Activated T-helper 2 cell treated with anti-CD3 and anti-CD28 coated beads, Interferon-gamma antibody, Interleukin-2, Interleukin-4, amounts not matched to agents 10 μg/mL and 5 μg/mL and 100 μg/mL, durations not matched to agents 14 hours and 24 hours and 36 hours (primary cell): ENCODE measurements at regions of chr3 and their contacts with region 1.

Region 1: GRCh38 chr3:4350789-4351163 is 47.6 kb downstream of the SETMAR start:
- DNase-seq: peak; percentile 27
- H3K4me3 Mint-ChIP-seq: peak overlapping the region; percentile 43
- H3K27ac Mint-ChIP-seq: peak overlapping the region; percentile 74
- H3K4me1 Mint-ChIP-seq: peaks cover 23% of the 10 kb centered on the region
- H3K27me3 Mint-ChIP-seq: peaks cover 9% of the 10 kb centered on the region

Region 2: DNA sequence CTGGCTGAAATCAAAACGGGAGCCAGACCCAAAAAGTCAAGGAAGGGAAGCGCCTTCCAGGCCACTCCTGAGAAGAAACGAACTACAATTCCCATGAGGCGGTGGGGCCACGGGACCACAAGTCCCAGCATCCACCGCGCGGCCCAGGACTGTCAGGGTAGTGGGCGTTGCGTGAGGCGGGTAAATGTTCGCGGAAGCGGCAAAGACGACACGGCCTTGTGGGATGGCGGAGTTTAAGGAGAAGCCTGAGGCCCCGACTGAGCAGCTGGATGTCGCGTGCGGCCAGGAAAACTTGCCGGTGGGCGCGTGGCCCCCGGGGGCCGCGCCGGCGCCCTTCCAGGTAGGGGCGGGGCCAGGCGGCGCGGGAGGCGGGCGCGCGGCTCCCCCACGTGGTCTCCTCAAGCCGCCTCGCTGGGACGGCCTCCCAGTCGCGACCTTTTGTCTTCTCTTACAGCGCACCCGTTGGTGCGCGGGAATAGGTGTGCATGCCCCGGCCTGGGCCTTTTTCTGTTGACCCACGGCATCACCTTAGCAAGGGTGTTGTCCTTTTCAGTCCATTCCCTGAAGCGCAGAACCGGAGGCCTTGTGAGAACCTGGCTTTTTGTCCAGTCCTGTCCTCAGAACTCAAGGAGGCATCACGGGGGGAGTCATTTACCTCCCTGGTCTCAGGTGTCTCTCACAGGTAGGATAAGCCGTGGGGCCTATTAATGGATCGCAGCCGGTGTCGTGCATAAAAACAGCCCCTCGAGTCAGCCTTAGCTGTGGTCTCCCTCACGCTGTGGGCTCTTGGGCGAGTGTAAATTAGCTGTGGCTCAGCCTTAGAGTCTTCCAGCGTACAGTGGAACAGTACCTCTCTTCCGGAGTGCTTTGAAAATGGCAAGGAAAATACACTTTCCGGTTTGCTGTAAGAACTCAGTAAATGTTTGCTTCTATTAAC is 47.3 kb before region 1 on chr3 and contains the start of gene SETMAR:
- intact Hi-C with region 1: loop called (anchors 1 kb)
- DNase-seq: peak; percentile 75
- H3K4me3 Mint-ChIP-seq: peak within 1 kb of the TSS; percentile 90
- H3K27ac Mint-ChIP-seq: peak within 1 kb of the TSS; percentile 95
- H3K4me1 Mint-ChIP-seq: peaks cover 22% of the 10 kb centered on the region
- H3K27me3 Mint-ChIP-seq: peaks cover 4% of the 10 kb centered on the region
- total RNA-seq, gene SETMAR: 16.0 and 17.6 TPM in 2 replicates

Region 3: DNA sequence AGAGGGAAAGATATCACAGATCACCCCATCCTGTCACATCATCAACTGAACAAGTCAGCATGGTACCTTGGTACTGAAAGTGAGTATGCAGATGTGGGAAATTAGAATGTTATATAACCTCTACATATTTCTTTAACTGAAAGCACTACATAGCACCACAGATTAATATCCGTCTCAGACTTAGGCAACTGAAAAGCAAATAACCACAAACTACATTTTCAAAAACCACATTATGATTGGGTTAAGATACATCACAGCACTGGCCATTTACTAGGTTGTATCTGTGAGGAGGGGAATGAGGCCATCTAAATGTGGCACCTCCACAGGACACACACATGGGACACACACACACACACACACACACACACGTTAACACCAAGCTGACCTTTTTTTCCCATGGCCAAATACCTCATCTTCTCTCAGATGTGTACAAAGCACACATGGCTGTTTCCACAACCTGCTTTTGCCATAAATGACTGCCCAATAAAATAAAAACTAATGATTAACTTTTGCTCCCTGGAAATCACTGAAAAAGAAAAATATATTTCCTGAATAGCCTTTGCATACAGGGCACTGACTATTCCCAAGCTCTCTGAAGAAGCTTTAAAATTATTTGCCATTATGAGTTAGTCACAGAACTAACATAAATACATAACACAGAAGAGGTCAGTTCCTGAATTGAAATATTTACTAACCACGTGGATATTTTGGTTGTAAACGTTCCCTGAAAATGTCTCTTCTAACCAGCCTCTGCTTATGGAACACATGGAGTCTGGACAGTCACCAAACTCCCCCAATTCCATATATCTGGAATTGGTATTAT is 56.2 kb after region 1 on chr3:
- intact Hi-C with region 1: loop called (anchors 1 kb)
- DNase-seq: no peak
- H3K4me3 Mint-ChIP-seq: no peak overlapping the region
- H3K27ac Mint-ChIP-seq: peak overlapping the region; percentile 47
- H3K4me1 Mint-ChIP-seq: peaks cover 75% of the 10 kb centered on the region
- H3K27me3 Mint-ChIP-seq: no peaks in the 10 kb centered on the region

Region 4: GRCh38 chr3:4466741-4467521 is 116.2 kb after region 1 on chr3 and contains the start of gene SUMF1:
- intact Hi-C with region 1: loop called (anchors 2 kb)
- DNase-seq: peak; percentile 67
- H3K4me3 Mint-ChIP-seq: peak within 1 kb of the TSS; percentile 95
- H3K27ac Mint-ChIP-seq: peak within 1 kb of the TSS; percentile 91
- H3K4me1 Mint-ChIP-seq: peaks cover 16% of the 10 kb centered on the region
- H3K27me3 Mint-ChIP-seq: peaks cover 3% of the 10 kb centered on the region
- total RNA-seq, gene SUMF1: 6.9 and 7.7 TPM in 2 replicates

Region 5: GRCh38 chr3:4597204-4597985 is 246.6 kb after region 1 on chr3:
- intact Hi-C with region 1: loop called (anchors 2 kb)
- DNase-seq: no peak
- H3K4me3 Mint-ChIP-seq: no peak overlapping the region
- H3K27ac Mint-ChIP-seq: no peak overlapping the region
- H3K4me1 Mint-ChIP-seq: peaks cover 44% of the 10 kb centered on the region
- H3K27me3 Mint-ChIP-seq: no peaks in the 10 kb centered on the region